ENCODE measurements at regions of chr12 and their contacts with region 1.

Region 1: GRCh38 chr12:104215638-104216297 is at the start of gene TXNRD1:
- DNase-seq: peak; percentile 63
- H3K4me3 ChIP-seq: peak within 1 kb of the TSS; percentile 31 to 45
- H3K27ac ChIP-seq: peak within 1 kb of the TSS; percentile 73
- H3K4me1 ChIP-seq: peaks cover 7% of the 10 kb centered on the region
- H3K27me3 ChIP-seq: no peaks in the 10 kb centered on the region
- CTCF ChIP-seq: peak; percentile 47 to 89 (median 68)
- POLR2A ChIP-seq: no peak
- total RNA-seq, gene TXNRD1: 87.6 to 115 TPM

Region 2: DNA sequence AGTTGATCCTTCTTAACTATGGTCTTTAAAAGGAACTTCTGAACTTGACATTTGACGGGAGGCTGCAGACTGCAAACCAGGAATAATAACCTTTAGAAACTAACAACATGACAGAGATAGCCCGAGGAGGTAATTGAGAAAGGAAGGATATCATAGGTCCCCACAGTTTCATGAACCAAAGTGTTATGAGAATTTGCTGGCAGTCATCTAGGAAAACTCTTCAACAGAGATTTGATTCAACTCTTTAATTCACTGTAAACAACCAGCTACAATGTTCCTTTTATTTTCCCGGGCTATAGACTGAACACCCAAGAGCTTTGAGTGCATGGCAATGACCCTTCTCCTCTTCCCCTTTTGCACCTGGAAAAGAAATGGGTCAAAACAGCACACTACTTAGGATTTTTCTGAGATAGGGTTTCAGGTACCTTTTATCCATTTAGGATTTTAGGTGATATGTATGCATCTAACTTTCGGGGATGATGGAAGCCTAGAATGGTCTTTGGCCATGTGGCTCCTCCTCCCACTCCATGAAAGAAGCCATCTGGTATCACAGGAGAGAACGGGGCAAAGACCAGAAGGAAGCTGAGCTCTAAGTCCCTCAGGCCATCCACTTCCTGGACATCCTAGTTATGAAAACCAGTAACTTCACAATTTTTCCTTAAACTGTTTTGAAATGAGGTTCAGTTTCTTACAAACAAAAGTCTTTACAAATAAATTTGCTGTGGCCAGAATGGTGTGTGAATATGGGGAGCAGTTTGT is 188.7 kb before region 1 on chr12:
- intact Hi-C with region 1: no loop called
- DNase-seq: no peak
- H3K4me3 ChIP-seq: no peak overlapping the region
- H3K27ac ChIP-seq: no peak overlapping the region
- H3K4me1 ChIP-seq: no peaks in the 10 kb centered on the region
- H3K27me3 ChIP-seq: no peaks in the 10 kb centered on the region
- CTCF ChIP-seq: no peak
- POLR2A ChIP-seq: no peak

Region 3: DNA sequence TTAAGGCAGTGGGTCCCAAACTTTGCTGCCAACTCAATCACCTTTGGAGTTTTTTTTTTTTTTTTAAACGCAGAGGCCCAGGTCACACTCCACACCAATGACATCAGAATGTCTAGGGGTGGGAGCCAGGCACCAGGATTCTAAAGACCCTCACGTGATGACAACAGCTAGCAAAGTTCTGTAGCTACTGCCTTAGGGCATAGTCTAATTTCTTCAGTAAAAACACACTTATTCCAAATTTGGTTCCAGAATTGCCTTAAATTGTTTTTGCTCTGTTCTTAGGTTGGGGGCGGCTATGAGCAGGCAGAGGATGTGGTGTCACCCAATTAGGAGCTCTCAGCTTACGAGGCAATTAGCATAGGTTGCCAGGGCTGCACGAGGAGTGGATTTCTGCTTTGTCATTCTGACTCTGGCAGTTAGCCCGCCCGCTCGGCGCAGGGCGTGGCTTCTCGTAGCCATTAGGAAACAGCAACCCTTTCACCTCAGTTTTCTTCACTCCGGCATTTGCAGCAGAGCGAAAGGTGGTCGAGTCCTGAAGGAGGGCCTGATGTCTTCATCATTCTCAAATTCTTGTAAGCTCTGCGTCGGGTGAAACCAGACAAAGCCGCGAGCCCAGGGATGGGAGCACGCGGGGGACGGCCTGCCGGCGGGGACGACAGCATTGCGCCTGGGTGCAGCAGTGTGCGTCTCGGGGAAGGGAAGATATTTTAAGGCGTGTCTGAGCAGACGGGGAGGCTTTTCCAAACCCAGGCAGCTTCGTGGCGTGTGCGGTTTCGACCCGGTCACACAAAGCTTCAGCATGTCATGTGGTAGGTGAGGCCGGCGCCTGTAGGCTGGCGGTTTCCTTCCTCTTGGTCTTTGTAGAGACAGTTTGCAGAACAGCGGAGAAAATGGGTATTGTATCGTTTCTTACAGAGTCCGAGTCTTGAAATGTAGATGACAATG is 71.0 kb after region 1 on chr12:
- intact Hi-C with region 1: loop called (anchors 2 kb)
- DNase-seq: peak; percentile 91
- H3K4me3 ChIP-seq: peak overlapping the region; percentile 54 to 61
- H3K27ac ChIP-seq: peak overlapping the region; percentile 85 to 91
- H3K4me1 ChIP-seq: no peaks in the 10 kb centered on the region
- H3K27me3 ChIP-seq: no peaks in the 10 kb centered on the region
- CTCF ChIP-seq: no peak
- POLR2A ChIP-seq: peak; percentile 79

Region 4: DNA sequence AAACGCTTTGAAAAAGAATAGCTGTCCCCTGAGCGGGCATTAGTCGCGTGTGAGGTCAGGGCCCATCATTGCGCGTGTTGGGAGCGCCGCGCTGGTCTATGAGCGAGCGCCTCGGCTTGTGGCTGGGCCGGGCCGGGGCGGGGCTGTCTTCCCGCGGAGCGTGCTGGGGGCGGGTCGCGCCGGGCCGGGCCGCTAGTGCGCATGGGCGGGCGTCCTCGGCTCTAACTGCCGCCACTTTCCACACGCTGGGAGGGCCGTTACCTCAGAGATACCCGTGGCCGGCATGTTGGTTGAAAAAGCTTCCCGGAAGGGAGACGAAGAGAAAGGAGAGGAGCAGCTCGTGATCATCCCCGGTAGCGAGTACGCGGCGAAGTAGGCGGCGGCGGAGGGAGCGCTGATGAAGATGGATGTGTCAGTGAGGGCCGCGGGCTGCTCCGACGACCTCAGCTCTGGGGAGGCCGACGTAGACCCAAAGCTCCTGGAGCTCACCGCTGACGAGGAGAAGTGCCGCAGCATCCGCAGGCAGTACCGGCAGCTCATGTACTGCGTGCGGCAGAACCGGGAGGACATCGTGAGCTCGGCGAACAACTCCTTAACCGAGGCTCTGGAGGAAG is 87.9 kb after region 1 on chr12 and contains the start of gene EID3:
- intact Hi-C with region 1: loop called (anchors 5 kb)
- DNase-seq: peak; percentile 80
- H3K4me3 ChIP-seq: peak within 1 kb of the TSS; percentile 27 to 38
- H3K27ac ChIP-seq: peak within 1 kb of the TSS; percentile 43 to 54
- H3K4me1 ChIP-seq: no peaks in the 10 kb centered on the region
- H3K27me3 ChIP-seq: no peaks in the 10 kb centered on the region
- CTCF ChIP-seq: no peak
- POLR2A ChIP-seq: peak; percentile 20
- total RNA-seq, gene EID3: 8.6 to 18.1 TPM

Region 5: DNA sequence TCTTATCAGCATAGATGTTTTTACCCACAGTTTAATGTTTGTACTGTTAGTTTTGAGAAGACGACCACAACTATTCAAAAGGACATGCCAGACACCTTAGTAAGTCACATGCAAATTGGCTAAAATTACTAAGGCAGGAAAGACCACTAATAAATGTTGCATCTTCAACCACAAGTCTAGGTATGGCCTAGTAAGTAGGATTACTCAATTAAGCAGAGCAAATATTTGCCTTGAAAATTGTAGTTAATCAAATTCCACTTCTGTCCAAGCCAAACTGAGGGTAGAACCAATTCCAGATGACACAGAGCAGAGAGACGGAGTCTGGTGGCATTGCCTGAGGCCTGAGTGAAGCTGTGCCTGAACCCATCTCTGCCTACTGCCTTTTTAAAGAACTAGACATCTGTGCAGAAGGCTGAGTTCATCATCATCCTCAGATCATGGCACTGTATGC is 211.3 kb after region 1 on chr12:
- intact Hi-C with region 1: no loop called
- DNase-seq: no peak
- H3K4me3 ChIP-seq: no peak overlapping the region
- H3K27ac ChIP-seq: no peak overlapping the region
- H3K4me1 ChIP-seq: no peaks in the 10 kb centered on the region
- H3K27me3 ChIP-seq: no peaks in the 10 kb centered on the region
- CTCF ChIP-seq: no peak
- POLR2A ChIP-seq: no peak

Measured in prostate gland (tissue), 2 donors.